Heart left ventricle (tissue), 16 donors: ENCODE measurements at regions of chr10 and their contacts with region 1.

Region 1: GRCh38 chr10:88810196-88810961 is 7.8 kb downstream of the LIPM start:
- DNase-seq: no peak
- ATAC-seq: peak in 1 of 4 donors; percentile 49
- H3K4me3 ChIP-seq: no peak overlapping the region
- H3K27ac ChIP-seq: no peak overlapping the region
- H3K4me1 ChIP-seq: no peaks in the 10 kb centered on the region
- H3K27me3 ChIP-seq: peaks cover 0 to 8% (median 0%) of the 10 kb centered on the region in 9 donors
- CTCF ChIP-seq: peak; percentile 39 to 68 (median 56)
- POLR2A ChIP-seq: no peak

Region 2: DNA sequence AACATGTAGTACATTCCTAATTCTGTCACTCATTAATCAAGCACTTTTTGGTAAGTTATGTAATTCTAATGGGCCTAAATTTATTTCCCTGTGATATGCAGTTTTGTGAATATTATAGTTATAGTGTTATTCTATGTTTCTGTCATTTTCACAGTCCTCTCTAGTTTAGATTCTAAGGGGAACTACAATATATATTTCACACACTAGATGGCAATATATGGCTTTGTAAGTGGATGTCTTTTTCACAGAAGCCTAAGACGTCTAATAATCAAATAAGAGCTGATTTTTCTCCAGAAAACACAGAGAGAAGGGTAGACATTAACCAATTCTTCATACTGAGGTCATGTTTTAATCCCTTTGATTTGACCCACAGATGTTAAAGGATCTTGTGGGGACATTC is 245.3 kb before region 1 on chr10:
- intact Hi-C with region 1: loop called in 4 of 10 experiments (anchors 5 to 10 kb)
- DNase-seq: no peak
- ATAC-seq: peak in 1 of 4 donors; percentile 33
- H3K4me3 ChIP-seq: no peak overlapping the region
- H3K27ac ChIP-seq: no peak overlapping the region
- H3K4me1 ChIP-seq: no peaks in the 10 kb centered on the region
- H3K27me3 ChIP-seq: no peaks in the 10 kb centered on the region
- CTCF ChIP-seq: peak in 11 of 12 donors; percentile 6 to 53 (median 35)
- POLR2A ChIP-seq: no peak

Region 3: DNA sequence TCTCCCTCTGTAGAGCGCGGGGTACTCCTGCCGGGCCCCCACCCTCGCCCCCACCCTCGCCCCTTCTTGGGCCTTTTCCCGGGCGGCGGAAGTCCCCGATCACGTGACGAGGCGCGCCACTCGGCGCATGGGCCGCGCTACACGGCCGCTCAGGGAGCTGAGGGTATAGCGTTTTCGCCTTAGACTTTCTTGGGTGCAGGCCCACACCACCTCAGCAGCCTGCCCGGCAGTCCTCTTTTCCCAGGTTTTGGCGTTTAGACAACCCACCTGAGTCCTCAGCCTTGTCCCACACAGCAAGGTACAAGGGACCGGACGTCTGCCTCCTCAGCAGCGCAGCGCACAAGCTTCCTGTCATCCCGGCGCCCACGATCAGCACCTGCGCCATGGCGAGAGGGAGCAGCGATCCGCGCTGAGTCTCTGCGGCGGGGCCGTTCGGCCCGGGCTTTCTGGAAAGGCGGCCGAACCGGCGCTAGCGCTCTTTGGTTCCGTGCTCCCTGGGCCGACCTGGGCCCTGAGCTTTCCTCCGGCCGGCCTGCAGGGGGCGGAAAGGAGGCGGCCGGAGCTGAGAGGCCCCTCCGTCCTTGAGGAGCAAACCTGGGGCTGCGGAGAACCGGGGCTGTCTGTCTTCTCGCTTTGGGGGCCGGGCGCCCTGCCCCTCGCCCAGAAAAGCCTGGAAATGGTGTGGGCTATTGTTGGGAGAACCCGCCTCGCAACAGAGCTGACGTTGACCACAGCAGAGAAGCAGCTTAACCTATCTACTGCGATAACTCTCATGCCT is 227.4 kb before region 1 on chr10 and contains the start of gene RNLS:
- intact Hi-C with region 1: loop called in 2 of 10 experiments (anchors 10 kb)
- DNase-seq: peak; percentile 68 to 87 (median 79)
- ATAC-seq: peak; percentile 93 to 96 (median 96)
- H3K4me3 ChIP-seq: peak within 1 kb of the TSS; percentile 51 to 83 (median 74)
- H3K27ac ChIP-seq: peak within 1 kb of the TSS; percentile 85 to 95 (median 93)
- H3K4me1 ChIP-seq: peaks cover 0 to 17% (median 4%) of the 10 kb centered on the region in 12 donors
- H3K27me3 ChIP-seq: no peaks in the 10 kb centered on the region
- CTCF ChIP-seq: peak; percentile 71 to 91 (median 82)
- POLR2A ChIP-seq: no peak
- total RNA-seq, gene RNLS: 8.7 to 30.7 (median 16.7) TPM

Region 4: GRCh38 chr10:88687853-88688467 is 122.4 kb before region 1 on chr10:
- intact Hi-C with region 1: loop called in 3 of 10 experiments (anchors 5 to 10 kb)
- DNase-seq: no peak
- ATAC-seq: no peak
- H3K4me3 ChIP-seq: no peak overlapping the region
- H3K27ac ChIP-seq: no peak overlapping the region
- H3K4me1 ChIP-seq: no peaks in the 10 kb centered on the region
- H3K27me3 ChIP-seq: peaks cover 0 to 5% (median 0%) of the 10 kb centered on the region in 9 donors
- CTCF ChIP-seq: peak; percentile 49 to 78 (median 62)
- POLR2A ChIP-seq: no peak

Region 5: DNA sequence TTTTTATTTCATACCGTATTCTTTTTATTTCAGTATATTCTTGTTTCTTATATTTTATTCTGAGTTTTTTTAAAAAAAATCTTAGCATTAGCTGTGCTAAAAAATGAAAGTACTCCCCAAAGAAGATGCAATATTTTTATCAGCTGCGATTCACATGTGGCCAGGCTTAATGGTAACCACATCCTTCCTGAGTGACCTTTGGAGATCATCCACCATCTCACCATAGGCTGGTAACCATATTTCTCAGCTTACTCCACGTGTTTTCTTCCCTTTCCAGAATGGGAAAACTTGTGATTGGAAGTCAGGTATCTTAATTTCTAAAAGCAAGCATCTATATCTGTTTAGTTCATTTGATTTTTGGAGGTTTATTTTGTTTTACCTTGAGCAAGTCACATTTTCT is 26.7 kb before region 1 on chr10:
- intact Hi-C with region 1: no loop called
- DNase-seq: no peak
- ATAC-seq: no peak
- H3K4me3 ChIP-seq: no peak overlapping the region
- H3K27ac ChIP-seq: no peak overlapping the region
- H3K4me1 ChIP-seq: no peaks in the 10 kb centered on the region
- H3K27me3 ChIP-seq: no peaks in the 10 kb centered on the region
- CTCF ChIP-seq: no peak
- POLR2A ChIP-seq: no peak